Naive thymus-derived CD4-positive, alpha-beta T cell (primary cell): ENCODE measurements at regions of chr13 and their contacts with region 1.

Region 1: GRCh38 chr13:84737661-84738060 is 855.4 kb upstream of the SLITRK1 start:
- DNase-seq: no peak
- ATAC-seq: no peak
- H3K4me3 ChIP-seq: no peak overlapping the region
- H3K4me3 Mint-ChIP-seq: no peak overlapping the region
- H3K27ac ChIP-seq: no peak overlapping the region
- H3K27ac Mint-ChIP-seq: no peak overlapping the region
- H3K4me1 ChIP-seq: no peaks in the 10 kb centered on the region
- H3K4me1 Mint-ChIP-seq: no peaks in the 10 kb centered on the region
- H3K27me3 ChIP-seq: no peaks in the 10 kb centered on the region
- H3K27me3 Mint-ChIP-seq: no peaks in the 10 kb centered on the region

Region 2: DNA sequence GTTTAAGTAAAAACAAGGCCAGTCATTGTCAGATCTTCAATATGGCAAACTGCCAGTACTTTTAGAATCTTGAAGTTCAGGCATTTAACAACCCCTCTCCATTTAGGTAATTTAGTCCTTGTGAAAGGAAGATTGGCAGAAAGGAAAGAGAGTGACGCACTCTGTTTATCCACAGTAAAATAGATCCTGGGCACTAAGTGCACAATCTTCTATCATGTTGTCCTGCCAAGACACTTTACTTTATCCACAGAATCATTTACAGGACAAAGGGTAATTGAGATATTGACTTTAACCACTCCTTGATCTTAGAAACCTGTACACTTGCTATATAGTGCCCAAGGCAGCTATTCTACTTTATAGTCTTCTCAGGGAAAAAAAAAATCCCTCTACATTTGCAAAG is 69.0 kb before region 1 on chr13:
- CTCF ChIA-PET with region 1: no interaction called
- POLR2A ChIA-PET with region 1: no interaction called
- intact Hi-C with region 1: no loop called
- DNase-seq: no peak
- ATAC-seq: no peak
- H3K4me3 ChIP-seq: no peak overlapping the region
- H3K4me3 Mint-ChIP-seq: no peak overlapping the region
- H3K27ac ChIP-seq: no peak overlapping the region
- H3K27ac Mint-ChIP-seq: no peak overlapping the region
- H3K4me1 ChIP-seq: no peaks in the 10 kb centered on the region
- H3K4me1 Mint-ChIP-seq: no peaks in the 10 kb centered on the region
- H3K27me3 ChIP-seq: no peaks in the 10 kb centered on the region
- H3K27me3 Mint-ChIP-seq: no peaks in the 10 kb centered on the region

Region 3: GRCh38 chr13:84684048-84684662 is 53.5 kb before region 1 on chr13:
- CTCF ChIA-PET with region 1: no interaction called
- POLR2A ChIA-PET with region 1: no interaction called
- intact Hi-C with region 1: loop called in 1 of 2 experiments (anchors 2 kb)
- DNase-seq: no peak
- ATAC-seq: no peak
- H3K4me3 ChIP-seq: no peak overlapping the region
- H3K4me3 Mint-ChIP-seq: no peak overlapping the region
- H3K27ac ChIP-seq: no peak overlapping the region
- H3K27ac Mint-ChIP-seq: no peak overlapping the region
- H3K4me1 ChIP-seq: no peaks in the 10 kb centered on the region
- H3K4me1 Mint-ChIP-seq: no peaks in the 10 kb centered on the region
- H3K27me3 ChIP-seq: no peaks in the 10 kb centered on the region
- H3K27me3 Mint-ChIP-seq: no peaks in the 10 kb centered on the region